HCT116 (cell line): ENCODE measurements at regions of chr6 and their contacts with region 1.

Region 1: GRCh38 chr6:4805553-4806336 is 29.5 kb downstream of the CDYL start:
- DNase-seq: peak; percentile 34
- ATAC-seq: peak; percentile 89
- H3K4me3 ChIP-seq: no peak overlapping the region
- H3K27ac ChIP-seq: no peak overlapping the region
- H3K4me1 ChIP-seq: peaks cover 0 to 20% of the 10 kb centered on the region in 2 experiments; a peak in 3 of 4 replicates
- H3K27me3 ChIP-seq: no peaks in the 10 kb centered on the region
- CTCF ChIP-seq: peak; percentile 42 to 79 (median 72); a peak in 5 of 6 replicates
- POLR2A ChIP-seq: no peak
- RAD21 ChIP-seq: peak; percentile 72

Region 2: DNA sequence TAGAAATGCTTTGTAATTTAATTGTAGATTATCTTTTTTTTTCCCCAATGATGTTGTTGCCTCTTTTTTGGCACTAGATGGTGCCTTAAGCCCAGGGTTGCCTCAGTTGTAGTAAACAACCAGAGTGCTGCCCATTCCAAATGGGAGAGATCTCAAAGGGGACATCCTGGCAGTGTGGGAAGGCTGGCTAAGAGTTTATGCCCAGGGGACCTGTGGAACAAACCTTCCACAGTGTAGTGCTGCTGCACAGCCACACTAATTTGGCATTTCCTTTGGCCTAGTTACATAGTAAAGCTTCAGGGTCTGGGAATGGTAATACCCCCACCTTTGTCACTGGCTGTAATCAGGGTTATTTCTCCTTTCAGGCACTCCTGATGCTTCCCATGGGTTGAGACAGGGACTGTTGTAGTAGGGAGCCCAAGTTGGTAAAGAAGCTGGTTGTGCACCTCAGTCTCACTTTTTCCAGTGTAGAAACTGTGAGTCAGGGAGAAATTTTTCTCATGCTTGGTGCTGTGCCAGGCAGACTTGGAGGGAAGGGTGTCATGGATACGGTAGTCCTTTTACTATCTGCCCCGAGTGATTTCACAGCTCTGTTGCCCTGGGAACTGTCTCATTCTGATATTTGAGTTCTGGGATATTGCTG is 492.6 kb before region 1 on chr6:
- CTCF ChIA-PET with region 1: no interaction called
- POLR2A ChIA-PET with region 1: no interaction called
- RAD21 ChIA-PET with region 1: no interaction called
- intact Hi-C with region 1: loop called (anchors 2 kb)
- DNase-seq: peak; percentile 49
- ATAC-seq: peak; percentile 90
- H3K4me3 ChIP-seq: peak overlapping the region in 1 of 2 experiments; percentile 14; a peak in 1 of 4 replicates
- H3K27ac ChIP-seq: no peak overlapping the region
- H3K4me1 ChIP-seq: peaks cover 2 to 17% of the 10 kb centered on the region in 2 experiments; a peak in 3 of 4 replicates
- H3K27me3 ChIP-seq: no peaks in the 10 kb centered on the region
- CTCF ChIP-seq: peak; percentile 47 to 80 (median 63); a peak in 5 of 6 replicates
- POLR2A ChIP-seq: no peak
- RAD21 ChIP-seq: peak; percentile 97